Activated B cell treated with CpG ODN at 0.5 μM for 24 hours (primary cell): ENCODE measurements at regions of chr18 and their contacts with region 1.

Region 1: GRCh38 chr18:67463829-67464228 is 52.7 kb downstream of the DSEL start:
- DNase-seq: no peak
- ATAC-seq: no peak
- H3K4me3 Mint-ChIP-seq: no peak overlapping the region
- H3K27ac Mint-ChIP-seq: no peak overlapping the region
- H3K4me1 Mint-ChIP-seq: peaks cover 16% of the 10 kb centered on the region
- H3K27me3 Mint-ChIP-seq: no peaks in the 10 kb centered on the region
- CTCF ChIP-seq: no peak

Region 2: GRCh38 chr18:67451960-67452359 is 11.9 kb before region 1 on chr18:
- CTCF ChIA-PET with region 1: no interaction called
- POLR2A ChIA-PET with region 1: no interaction called
- intact Hi-C with region 1: no loop called
- DNase-seq: no peak
- ATAC-seq: no peak
- H3K4me3 Mint-ChIP-seq: no peak overlapping the region
- H3K27ac Mint-ChIP-seq: no peak overlapping the region
- H3K4me1 Mint-ChIP-seq: no peaks in the 10 kb centered on the region
- H3K27me3 Mint-ChIP-seq: no peaks in the 10 kb centered on the region
- CTCF ChIP-seq: no peak

Region 3: DNA sequence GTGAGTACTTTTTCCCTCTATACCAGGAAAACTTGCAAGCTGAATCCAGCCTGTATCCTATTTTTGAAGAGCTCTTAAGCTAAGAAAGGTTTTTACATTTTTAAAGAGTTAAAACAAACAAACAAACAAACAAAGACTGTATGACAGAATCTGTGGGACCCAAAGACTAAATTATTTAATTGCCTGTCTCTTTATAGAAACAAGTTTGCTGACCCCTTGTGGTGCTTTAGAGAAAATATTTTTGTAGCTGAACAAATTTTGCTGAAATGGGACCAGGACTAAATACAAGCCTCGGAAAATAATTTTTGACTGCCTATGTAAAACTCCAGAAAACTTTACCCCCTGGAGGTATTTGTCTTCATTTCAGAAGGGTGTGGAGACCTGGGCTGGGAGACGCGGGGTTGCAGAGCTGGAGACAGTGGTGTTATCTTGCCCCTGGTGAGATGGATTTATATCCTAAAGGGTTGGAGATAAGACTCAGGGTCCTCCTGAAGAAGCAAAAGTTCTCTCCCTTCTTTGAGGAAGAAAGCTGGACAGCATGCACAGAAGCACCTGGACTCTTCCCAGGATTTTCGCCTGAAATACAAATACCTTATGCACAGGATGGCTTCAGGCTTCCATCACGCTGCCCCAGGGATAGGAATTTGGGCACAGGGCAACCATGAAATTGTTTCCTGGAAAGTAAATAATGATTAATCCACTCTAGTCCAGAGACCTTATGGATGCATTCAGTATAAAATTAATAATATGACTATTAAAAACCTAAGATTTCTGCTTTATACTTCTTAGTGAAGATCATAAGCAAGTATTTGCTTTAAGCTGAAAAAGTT is 1196.7 kb after region 1 on chr18:
- CTCF ChIA-PET with region 1: no interaction called
- POLR2A ChIA-PET with region 1: no interaction called
- intact Hi-C with region 1: loop called (anchors 5 kb)
- DNase-seq: no peak
- ATAC-seq: no peak
- H3K4me3 Mint-ChIP-seq: no peak overlapping the region
- H3K27ac Mint-ChIP-seq: no peak overlapping the region
- H3K4me1 Mint-ChIP-seq: peaks cover 3% of the 10 kb centered on the region
- H3K27me3 Mint-ChIP-seq: peaks cover 2% of the 10 kb centered on the region
- CTCF ChIP-seq: no peak